ENCODE measurements at regions of chr16 and their contacts with region 1.

Region 1: DNA sequence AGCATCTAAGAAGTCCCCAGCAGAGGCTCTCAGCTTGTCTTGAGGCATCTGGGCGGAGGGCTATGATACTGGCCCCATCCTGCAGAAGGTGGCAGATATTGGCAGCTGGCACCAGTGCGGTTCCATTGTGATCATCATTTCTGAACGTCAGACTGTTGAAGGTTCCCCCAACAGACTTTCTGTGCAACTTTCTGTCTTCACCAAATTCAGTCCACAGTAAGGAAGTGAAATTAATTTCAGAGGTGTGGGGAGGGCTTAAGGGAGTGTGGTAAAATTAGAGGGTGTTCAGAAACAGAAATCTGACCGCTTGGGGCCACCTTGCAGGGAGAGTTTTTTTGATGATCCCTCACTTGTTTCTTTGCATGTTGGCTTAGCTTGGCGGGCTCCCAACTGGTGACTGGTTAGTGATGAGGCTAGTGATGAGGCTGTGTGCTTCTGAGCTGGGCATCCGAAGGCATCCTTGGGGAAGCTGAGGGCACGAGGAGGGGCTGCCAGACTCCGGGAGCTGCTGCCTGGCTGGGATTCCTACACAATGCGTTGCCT is at the start of gene CIITA:
- DNase-seq: peak; percentile 60
- H3K4me3 Mint-ChIP-seq: peak within 1 kb of the TSS; percentile 80
- H3K27ac Mint-ChIP-seq: peak within 1 kb of the TSS; percentile 75
- H3K4me1 Mint-ChIP-seq: peaks cover 75% of the 10 kb centered on the region
- H3K27me3 Mint-ChIP-seq: peaks cover 4% of the 10 kb centered on the region
- total RNA-seq, gene CIITA: 8.6 and 9.3 TPM in 2 replicates

Region 2: DNA sequence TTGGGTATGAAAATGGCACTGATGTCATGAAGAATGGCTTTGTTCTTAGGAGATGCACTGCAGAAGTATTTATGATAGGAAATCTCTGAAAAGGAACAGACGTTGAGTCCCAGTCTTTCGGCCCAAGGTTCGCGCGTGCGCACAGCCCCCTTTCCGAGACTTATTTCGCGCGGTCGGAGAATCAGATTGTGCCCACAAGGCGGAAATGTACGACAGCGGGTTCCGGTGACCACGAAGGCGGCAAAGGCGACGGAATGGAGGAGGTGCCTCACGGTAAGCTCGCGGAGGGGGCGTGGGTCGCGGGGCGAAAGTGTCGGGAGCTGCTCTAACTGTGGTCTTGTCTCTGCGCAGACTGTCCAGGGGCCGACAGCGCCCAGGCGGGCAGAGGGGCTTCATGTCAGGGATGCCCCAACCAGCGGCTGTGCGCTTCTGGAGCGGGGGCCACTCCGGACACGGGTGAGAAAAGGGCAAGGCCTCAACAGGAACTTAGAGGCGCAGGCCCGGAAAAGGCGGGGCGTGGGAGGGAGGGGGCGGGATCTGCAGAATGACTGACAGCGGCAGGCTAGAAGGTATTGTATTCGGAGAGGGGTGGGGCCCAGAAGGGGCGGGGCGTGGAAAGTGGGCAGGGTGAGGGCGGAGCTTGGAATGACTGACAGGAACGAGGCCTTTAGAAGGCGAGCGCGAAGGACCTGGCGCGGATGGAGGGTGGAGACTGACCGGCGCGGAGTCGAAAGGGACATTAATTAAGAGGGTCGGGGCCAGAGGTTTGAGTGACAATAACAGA is 133.1 kb before region 1 on chr16 and contains the start of gene NUBP1:
- intact Hi-C with region 1: loop called (anchors 2 kb)
- DNase-seq: peak; percentile 96
- H3K4me3 Mint-ChIP-seq: peak within 1 kb of the TSS; percentile 88
- H3K27ac Mint-ChIP-seq: peak within 1 kb of the TSS; percentile 96
- H3K4me1 Mint-ChIP-seq: peaks cover 44% of the 10 kb centered on the region
- H3K27me3 Mint-ChIP-seq: no peaks in the 10 kb centered on the region
- total RNA-seq, gene NUBP1: 33.9 and 35.9 TPM in 2 replicates

Region 3: DNA sequence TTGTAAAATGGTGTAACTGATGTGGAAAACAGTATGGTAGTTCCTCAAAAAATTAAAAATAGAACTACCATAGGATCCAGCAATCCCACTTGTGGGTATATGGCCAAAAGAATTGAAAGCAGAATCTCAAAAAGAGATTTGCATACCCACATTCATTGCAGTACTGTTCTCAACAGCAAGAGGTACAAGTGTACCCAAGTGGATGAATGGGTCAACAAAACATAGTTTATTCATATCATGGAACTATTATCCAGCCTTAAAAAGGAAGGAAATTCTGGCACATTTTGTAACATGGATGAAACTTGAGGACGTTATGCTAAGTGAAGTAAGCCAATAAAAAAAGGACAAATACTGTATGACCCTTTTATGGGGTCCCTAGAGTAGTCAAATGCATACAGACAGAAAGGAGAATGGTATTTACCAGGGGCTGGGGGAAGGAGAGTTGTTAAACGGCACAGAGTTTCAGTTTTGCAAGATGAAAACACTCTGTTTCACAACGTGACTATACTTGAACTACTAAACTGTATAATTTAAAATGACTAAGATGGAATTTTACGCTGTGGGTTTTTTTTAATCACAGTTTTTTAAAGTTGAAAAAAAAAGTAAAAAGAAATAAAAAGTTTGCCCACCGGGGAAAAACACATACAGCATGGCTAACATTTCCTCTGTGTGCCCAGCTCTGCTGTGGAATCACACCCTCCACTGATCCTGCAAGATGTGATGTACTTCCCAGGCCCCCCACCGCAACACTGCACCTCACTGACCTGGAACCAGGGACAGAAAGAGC is 64.4 kb before region 1 on chr16:
- intact Hi-C with region 1: loop called (anchors 5 kb)
- DNase-seq: no peak
- H3K4me3 Mint-ChIP-seq: no peak overlapping the region
- H3K27ac Mint-ChIP-seq: peak overlapping the region; percentile 79
- H3K4me1 Mint-ChIP-seq: peaks cover 14% of the 10 kb centered on the region
- H3K27me3 Mint-ChIP-seq: peaks cover 9% of the 10 kb centered on the region

Measured in activated T-helper 2 cell treated with anti-CD3 and anti-CD28 coated beads, Interferon-gamma antibody, Interleukin-2, Interleukin-4, amounts not matched to agents 10 μg/mL and 5 μg/mL and 100 μg/mL, durations not matched to agents 14 hours and 24 hours and 36 hours (primary cell).